MCF 10A (cell line): ENCODE measurements at regions of chr3 and their contacts with region 1.

Region 1: GRCh38 chr3:181709537-181710279 is 2.0 kb upstream of the SOX2 start:
- DNase-seq: peak; percentile 75
- H3K4me3 Mint-ChIP-seq: peak overlapping the region; percentile 59
- H3K27ac Mint-ChIP-seq: no peak overlapping the region
- H3K4me1 Mint-ChIP-seq: peaks cover 8% of the 10 kb centered on the region
- H3K27me3 Mint-ChIP-seq: no peaks in the 10 kb centered on the region
- CTCF ChIP-seq: peak; percentile 59

Region 2: DNA sequence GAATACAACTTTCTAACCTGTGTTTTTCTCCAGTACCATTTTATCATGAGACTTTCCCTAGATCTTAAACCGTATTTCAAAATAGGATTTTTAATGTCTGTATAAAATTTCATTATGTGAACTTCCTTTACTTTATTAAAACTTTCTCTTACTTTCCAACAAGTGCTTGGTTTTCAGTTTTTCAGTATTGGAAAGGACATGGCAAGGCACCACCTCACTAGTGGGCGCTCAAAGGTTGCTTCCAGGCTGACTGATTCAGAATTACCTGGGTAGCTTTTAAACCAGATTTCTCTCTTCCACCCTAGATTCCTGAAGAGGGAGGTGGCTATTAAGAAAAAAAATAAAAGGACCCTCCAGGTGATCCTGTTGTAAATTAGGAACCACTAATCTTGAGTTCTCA is 238.6 kb after region 1 on chr3:
- CTCF ChIA-PET with region 1: interaction called, 3 read pairs
- POLR2A ChIA-PET with region 1: no interaction called
- intact Hi-C with region 1: loop called (anchors 5 kb)
- DNase-seq: peak; percentile 27
- H3K4me3 Mint-ChIP-seq: no peak overlapping the region
- H3K27ac Mint-ChIP-seq: no peak overlapping the region
- H3K4me1 Mint-ChIP-seq: no peaks in the 10 kb centered on the region
- H3K27me3 Mint-ChIP-seq: no peaks in the 10 kb centered on the region
- CTCF ChIP-seq: peak; percentile 43

Region 3: GRCh38 chr3:182490596-182491491 is 781.1 kb after region 1 on chr3:
- CTCF ChIA-PET with region 1: interaction called, 3 read pairs
- POLR2A ChIA-PET with region 1: no interaction called
- intact Hi-C with region 1: loop called (anchors 1 kb)
- DNase-seq: peak; percentile 62
- H3K4me3 Mint-ChIP-seq: no peak overlapping the region
- H3K27ac Mint-ChIP-seq: no peak overlapping the region
- H3K4me1 Mint-ChIP-seq: no peaks in the 10 kb centered on the region
- H3K27me3 Mint-ChIP-seq: no peaks in the 10 kb centered on the region
- CTCF ChIP-seq: peak; percentile 36

Region 4: GRCh38 chr3:182618085-182618732 is 908.5 kb after region 1 on chr3:
- CTCF ChIA-PET with region 1: interaction called, 8 read pairs
- POLR2A ChIA-PET with region 1: no interaction called
- intact Hi-C with region 1: loop called (anchors 1 kb)
- DNase-seq: peak; percentile 47
- H3K4me3 Mint-ChIP-seq: no peak overlapping the region
- H3K27ac Mint-ChIP-seq: peak overlapping the region; percentile 15
- H3K4me1 Mint-ChIP-seq: peaks cover 30% of the 10 kb centered on the region
- H3K27me3 Mint-ChIP-seq: no peaks in the 10 kb centered on the region
- CTCF ChIP-seq: peak; percentile 51